HepG2 (cell line): ENCODE measurements at regions of chr6 and their contacts with region 1.

Region 1: DNA sequence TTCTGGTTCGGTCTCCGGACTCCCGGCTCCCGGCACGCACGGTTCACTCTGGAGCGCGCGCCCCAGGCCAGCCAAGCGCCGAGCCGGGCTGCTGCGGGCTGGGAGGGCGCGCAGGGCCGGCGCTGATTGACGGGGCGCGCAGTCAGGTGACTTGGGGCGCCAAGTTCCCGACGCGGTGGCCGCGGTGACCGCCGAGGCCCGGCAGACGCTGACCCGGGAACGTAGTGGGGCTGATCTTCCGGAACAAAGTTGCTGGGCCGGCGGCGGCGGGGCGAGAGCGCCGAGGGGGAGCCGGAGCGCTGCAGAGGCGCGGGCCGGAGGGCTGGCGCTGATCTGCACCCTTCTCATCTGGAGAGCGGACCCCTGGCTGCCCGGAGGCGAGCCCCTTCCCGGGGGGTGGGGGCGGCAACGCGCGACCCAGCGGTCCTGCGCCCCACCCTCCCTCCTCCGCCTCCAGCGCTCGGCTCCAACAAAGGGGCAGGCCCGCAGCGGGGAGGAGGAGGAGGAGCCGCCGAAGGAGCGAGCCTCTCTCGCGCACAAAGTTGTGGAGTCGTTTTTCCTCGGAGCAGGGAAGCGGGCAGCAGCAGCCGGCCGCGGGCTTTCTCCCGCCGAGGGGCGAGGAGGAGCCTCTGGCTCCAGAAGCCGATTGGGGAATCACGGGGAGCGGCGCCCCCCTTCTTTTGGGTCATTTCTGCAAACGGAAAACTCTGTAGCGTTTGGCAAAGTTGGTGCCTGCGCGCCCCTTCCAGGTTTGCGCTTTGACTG is at the start of gene UTRN:
- DNase-seq: peak; percentile 74
- ATAC-seq: peak; percentile 78
- H3K4me3 ChIP-seq: peak within 1 kb of the TSS; percentile 87 to 99 (median 89)
- H3K27ac ChIP-seq: peak within 1 kb of the TSS; percentile 88
- H3K4me1 ChIP-seq: peaks cover 38% of the 10 kb centered on the region
- H3K27me3 ChIP-seq: peaks cover 0 to 3% of the 10 kb centered on the region in 2 experiments; a peak in 1 of 5 replicates
- CTCF ChIP-seq: peak; percentile 27; the same call in 1 of the 2 replicates
- EP300 ChIP-seq: no peak
- POLR2A ChIP-seq: peak; percentile 74 to 75
- RAD21 ChIP-seq: peak; percentile 53; the same call in 1 of the 2 replicates
- total RNA-seq, gene UTRN: 85.4 and 102 TPM in 2 replicates

Region 2: DNA sequence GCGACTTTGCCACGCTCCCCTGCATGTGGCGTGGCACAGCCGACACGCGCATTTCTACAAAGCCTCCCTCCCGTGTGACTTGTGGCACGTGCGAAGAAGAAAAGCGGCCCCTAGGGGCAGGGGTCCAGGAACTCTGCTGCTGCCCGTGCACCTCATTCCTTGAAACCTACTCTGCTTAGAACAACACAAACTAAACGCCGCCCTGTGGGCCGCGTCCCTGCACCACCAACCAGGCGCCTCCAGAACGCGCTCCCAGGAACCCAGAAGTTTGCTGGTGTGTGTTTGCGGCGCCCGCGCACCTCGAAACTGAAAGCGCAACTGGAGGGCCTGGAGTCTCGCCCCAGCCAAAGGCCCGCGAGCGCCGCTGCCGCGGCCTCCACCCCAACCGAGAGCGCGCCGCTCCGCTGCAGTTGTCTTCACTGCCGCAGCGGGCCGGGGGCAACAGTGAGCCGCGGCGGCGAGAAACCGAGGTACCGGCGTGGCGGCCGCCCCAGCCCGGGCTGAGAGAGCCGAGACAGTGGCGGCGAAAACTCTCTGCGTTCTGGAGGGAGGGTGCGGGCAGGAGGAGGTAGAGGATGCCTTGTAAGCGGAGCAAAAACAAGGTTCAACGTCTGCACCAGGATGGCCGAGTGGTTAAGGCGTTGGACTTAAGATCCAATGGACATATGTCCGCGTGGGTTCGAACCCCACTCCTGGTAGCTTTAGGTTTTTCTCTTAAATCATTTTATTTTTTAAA is 68.9 kb before region 1 on chr6:
- CTCF ChIA-PET with region 1: no interaction called
- POLR2A ChIA-PET with region 1: interaction called, 8 read pairs
- in situ Hi-C with region 1: loop called (anchors 5 kb)
- intact Hi-C with region 1: loop called (anchors 1 kb)
- DNase-seq: peak; percentile 94
- ATAC-seq: peak; percentile 92
- H3K4me3 ChIP-seq: peak overlapping the region; percentile 68 to 89 (median 82)
- H3K27ac ChIP-seq: peak overlapping the region; percentile 81
- H3K4me1 ChIP-seq: peaks cover 23% of the 10 kb centered on the region
- H3K27me3 ChIP-seq: peaks cover 0 to 2% of the 10 kb centered on the region in 2 experiments; a peak in 1 of 5 replicates
- CTCF ChIP-seq: peak; percentile 89
- EP300 ChIP-seq: peak; percentile 51 to 71; a peak in 3 of 4 replicates
- POLR2A ChIP-seq: peak in 1 of 2 experiments; percentile 60; a peak in 3 of 4 replicates
- RAD21 ChIP-seq: peak; percentile 97

Region 3: DNA sequence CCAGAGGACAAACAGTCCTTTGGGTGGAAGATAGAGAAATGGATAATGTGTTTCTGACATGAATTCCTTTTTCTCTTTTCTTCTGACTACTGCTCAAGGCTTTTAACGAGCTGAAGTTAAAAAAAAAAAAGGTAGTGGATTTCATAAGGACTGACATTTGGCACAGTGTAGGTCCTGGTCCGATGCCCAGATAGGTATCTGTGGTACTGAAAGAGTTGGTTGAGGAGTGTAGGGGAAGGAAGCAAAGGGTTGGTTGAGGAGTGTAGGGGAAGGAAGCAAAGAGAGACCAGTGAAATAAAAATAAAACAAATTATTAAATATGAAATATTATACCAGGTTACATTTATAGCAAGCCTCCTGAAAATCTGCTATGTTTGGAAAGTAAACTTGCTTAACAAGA is 12.0 kb after region 1 on chr6:
- CTCF ChIA-PET with region 1: no interaction called
- POLR2A ChIA-PET with region 1: interaction called, 12 read pairs
- in situ Hi-C with region 1: no loop called
- intact Hi-C with region 1: loop called (anchors 2 kb)
- DNase-seq: no peak
- ATAC-seq: peak; percentile 44; the same call in 2 of the 3 replicates
- H3K4me3 ChIP-seq: no peak overlapping the region
- H3K27ac ChIP-seq: peak overlapping the region; percentile 20
- H3K4me1 ChIP-seq: peaks cover 92% of the 10 kb centered on the region
- H3K27me3 ChIP-seq: no peaks in the 10 kb centered on the region
- CTCF ChIP-seq: no peak
- EP300 ChIP-seq: no peak
- POLR2A ChIP-seq: no peak
- RAD21 ChIP-seq: no peak

Region 4: DNA sequence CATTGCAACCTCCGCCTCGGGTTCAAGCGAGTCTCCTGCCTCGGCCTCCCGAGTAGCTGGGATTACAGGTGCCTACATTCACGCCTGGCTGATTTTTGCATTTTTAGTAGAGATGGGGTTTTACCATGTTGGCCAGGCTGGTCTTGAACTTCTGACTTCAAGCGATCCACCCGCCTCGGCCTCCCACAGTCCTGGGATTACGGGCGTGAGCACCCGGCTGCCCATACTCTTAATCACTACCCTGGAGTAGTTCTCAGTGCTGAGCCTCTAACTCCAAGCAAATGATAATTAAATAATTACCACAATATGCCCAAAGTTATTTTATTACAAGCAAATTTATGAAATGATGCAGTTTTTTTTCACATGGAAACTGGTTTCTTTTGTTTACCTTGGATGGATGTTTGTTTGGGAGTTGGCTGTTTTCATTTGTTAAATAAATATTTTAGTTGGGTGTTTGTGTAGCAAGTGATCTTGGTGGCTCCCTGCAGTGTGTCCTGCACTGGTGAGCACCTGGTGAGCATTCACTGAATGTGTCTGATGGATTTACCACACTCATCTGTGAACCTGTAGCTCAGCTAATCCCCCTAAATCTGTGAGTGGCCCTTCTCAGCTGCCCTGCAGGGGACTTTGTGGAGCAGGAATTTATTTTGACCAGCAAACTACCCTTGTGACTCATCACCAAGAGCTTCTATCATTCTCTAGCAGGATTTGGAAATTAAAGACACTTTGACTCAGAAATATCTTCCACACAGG is 37.0 kb after region 1 on chr6:
- CTCF ChIA-PET with region 1: no interaction called
- POLR2A ChIA-PET with region 1: interaction called, 3 read pairs
- in situ Hi-C with region 1: no loop called
- intact Hi-C with region 1: loop called (anchors 5 kb)
- DNase-seq: no peak
- ATAC-seq: peak; percentile 68
- H3K4me3 ChIP-seq: no peak overlapping the region
- H3K27ac ChIP-seq: peak overlapping the region; percentile 32
- H3K4me1 ChIP-seq: peaks cover 93% of the 10 kb centered on the region
- H3K27me3 ChIP-seq: no peaks in the 10 kb centered on the region
- CTCF ChIP-seq: no peak
- EP300 ChIP-seq: 0 out of 4 replicates have a peak, but pooled peaks of 1 of the 2 experiments have one; percentile 33
- POLR2A ChIP-seq: no peak
- RAD21 ChIP-seq: no peak

Region 5: GRCh38 chr6:144415014-144415413 is 130.0 kb after region 1 on chr6:
- CTCF ChIA-PET with region 1: no interaction called
- POLR2A ChIA-PET with region 1: interaction called, 4 read pairs
- in situ Hi-C with region 1: no loop called
- intact Hi-C with region 1: loop called (anchors 1 kb)
- DNase-seq: peak; percentile 95
- ATAC-seq: peak; percentile 96
- H3K4me3 ChIP-seq: no peak overlapping the region; a peak in 1 of 6 replicates
- H3K27ac ChIP-seq: peak overlapping the region; percentile 32
- H3K4me1 ChIP-seq: peaks cover 42% of the 10 kb centered on the region
- H3K27me3 ChIP-seq: no peaks in the 10 kb centered on the region
- CTCF ChIP-seq: no peak
- EP300 ChIP-seq: peak in 1 of 2 experiments; percentile 84; a peak in 3 of 4 replicates
- POLR2A ChIP-seq: no peak
- RAD21 ChIP-seq: no peak

Region 6: GRCh38 chr6:144482142-144482541 is 197.2 kb after region 1 on chr6:
- CTCF ChIA-PET with region 1: no interaction called
- POLR2A ChIA-PET with region 1: interaction called, 3 read pairs
- in situ Hi-C with region 1: no loop called
- intact Hi-C with region 1: loop called (anchors 2 kb)
- DNase-seq: peak; percentile 69
- ATAC-seq: peak; percentile 80
- H3K4me3 ChIP-seq: no peak overlapping the region
- H3K27ac ChIP-seq: no peak overlapping the region
- H3K4me1 ChIP-seq: peaks cover 14% of the 10 kb centered on the region
- H3K27me3 ChIP-seq: no peaks in the 10 kb centered on the region
- CTCF ChIP-seq: peak; percentile 73
- EP300 ChIP-seq: no peak
- POLR2A ChIP-seq: no peak
- RAD21 ChIP-seq: no peak

Region 7: DNA sequence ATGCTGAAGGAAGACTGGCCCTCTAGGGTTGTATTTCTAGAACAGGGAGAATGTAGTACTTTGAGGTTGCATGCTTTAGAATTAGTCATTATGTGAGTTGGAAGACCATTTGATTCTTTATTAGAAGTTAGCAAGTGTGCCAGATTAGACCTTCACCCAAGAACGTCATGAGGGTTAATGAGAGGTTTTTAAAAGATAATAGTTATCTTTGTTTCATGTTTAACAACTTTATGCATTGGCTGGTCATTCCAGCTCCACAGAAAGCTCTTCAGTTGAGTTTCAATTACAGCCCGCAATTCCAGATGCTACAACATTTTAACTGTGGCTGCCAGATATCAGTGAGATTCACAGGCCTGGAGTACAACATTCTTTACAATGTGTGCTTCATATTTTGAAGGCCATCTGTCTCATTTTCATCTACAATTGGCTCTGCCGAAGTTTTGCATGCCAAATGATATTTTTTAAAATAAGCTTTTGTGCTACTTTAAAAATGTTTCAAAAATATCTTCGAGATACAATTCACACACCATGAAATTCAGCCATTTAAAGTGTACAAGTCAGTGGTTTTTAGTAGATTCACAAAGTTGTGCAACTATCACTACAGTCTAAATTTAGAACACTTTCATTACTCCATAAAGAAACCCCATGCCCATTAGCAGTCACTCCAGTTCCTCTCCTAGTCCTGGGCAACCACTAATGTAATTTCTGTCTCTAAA is 1590.7 kb after region 1 on chr6:
- CTCF ChIA-PET with region 1: no interaction called
- POLR2A ChIA-PET with region 1: no interaction called
- in situ Hi-C with region 1: no loop called
- intact Hi-C with region 1: no loop called
- DNase-seq: no peak
- ATAC-seq: no peak
- H3K4me3 ChIP-seq: no peak overlapping the region
- H3K27ac ChIP-seq: no peak overlapping the region
- H3K4me1 ChIP-seq: no peaks in the 10 kb centered on the region
- H3K27me3 ChIP-seq: no peaks in the 10 kb centered on the region
- CTCF ChIP-seq: no peak
- EP300 ChIP-seq: no peak
- POLR2A ChIP-seq: no peak
- RAD21 ChIP-seq: no peak